Naive thymus-derived CD4-positive, alpha-beta T cell (primary cell): ENCODE measurements at regions of chr2 and their contacts with region 1.

Region 1: DNA sequence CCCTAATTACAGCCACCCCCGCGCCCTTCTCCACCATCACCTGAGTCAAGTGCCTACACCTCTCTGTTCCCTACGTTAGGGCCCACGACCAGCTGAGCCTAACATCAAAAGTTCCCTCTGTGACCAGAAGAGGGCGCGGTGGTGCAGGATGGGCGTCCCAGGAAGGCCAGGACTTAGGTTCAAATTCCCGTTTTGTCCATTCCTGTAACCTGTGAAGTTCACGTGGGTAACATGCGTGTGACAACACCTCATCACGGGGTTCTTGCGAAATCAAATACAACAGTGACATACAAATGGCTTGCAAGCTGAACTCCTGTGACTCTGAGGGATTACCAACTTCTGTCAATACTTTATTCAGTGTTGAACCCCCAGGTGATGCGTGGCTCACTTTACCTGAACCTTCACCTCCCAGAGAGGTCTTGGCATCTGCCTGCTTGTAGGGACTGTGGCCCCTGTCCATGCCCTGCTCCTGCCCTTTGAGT is 207.9 kb downstream of the ARL4C start:
- DNase-seq: peak; percentile 61 to 81 (median 70)
- ATAC-seq: peak; percentile 30
- H3K4me3 ChIP-seq: no peak overlapping the region
- H3K4me3 Mint-ChIP-seq: peak overlapping the region; percentile 10 to 87 (median 70)
- H3K27ac ChIP-seq: peak overlapping the region; percentile 94
- H3K27ac Mint-ChIP-seq: peak overlapping the region; percentile 92 to 100 (median 99)
- H3K4me1 ChIP-seq: peaks cover 56 to 63% of the 10 kb centered on the region in 2 donors
- H3K4me1 Mint-ChIP-seq: peaks cover 47 to 80% (median 68%) of the 10 kb centered on the region in 7 donors
- H3K27me3 ChIP-seq: no peaks in the 10 kb centered on the region
- H3K27me3 Mint-ChIP-seq: no peaks in the 10 kb centered on the region

Region 2: DNA sequence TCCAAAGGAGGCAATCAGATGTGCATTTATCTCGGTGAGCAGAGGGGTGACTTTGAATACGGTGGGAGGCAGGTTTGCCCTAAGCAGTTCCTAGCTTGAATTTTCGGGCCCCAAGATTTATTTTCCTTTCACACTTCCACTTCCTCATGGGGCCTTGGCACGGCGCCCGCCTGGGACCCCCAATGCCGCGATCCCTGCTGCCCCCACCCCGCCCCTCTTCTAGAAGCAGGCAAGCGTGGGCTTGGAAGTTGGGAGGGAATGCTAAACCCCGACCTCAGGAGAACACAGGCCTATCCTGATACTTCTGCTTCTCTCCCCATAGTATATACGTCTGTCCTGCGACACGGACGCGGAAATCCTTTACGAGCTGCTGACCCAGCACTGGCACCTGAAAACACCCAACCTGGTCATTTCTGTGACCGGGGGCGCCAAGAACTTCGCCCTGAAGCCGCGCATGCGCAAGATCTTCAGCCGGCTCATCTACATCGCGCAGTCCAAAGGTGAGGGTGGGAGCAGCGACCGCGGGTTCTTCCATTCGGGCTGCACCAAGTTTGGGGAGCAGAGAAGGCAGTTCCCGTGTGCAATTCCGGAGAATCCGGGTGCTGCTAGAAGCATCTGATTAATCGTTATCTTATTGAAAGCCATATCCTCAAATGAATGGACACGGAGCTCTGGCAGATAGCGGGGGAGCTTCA is 350.2 kb before region 1 on chr2:
- CTCF ChIA-PET with region 1: no interaction called
- POLR2A ChIA-PET with region 1: no interaction called
- intact Hi-C with region 1: no loop called
- DNase-seq: no peak
- ATAC-seq: no peak
- H3K4me3 ChIP-seq: peak overlapping the region; percentile 23
- H3K4me3 Mint-ChIP-seq: peak overlapping the region; percentile 41 to 77 (median 66)
- H3K27ac ChIP-seq: no peak overlapping the region
- H3K27ac Mint-ChIP-seq: no peak overlapping the region
- H3K4me1 ChIP-seq: peaks cover 0 to 5% of the 10 kb centered on the region in 2 donors
- H3K4me1 Mint-ChIP-seq: peaks cover 0 to 13% (median 8%) of the 10 kb centered on the region in 7 donors
- H3K27me3 ChIP-seq: no peaks in the 10 kb centered on the region
- H3K27me3 Mint-ChIP-seq: peaks cover 46 to 68% (median 62%) of the 10 kb centered on the region in 5 donors

Region 3: DNA sequence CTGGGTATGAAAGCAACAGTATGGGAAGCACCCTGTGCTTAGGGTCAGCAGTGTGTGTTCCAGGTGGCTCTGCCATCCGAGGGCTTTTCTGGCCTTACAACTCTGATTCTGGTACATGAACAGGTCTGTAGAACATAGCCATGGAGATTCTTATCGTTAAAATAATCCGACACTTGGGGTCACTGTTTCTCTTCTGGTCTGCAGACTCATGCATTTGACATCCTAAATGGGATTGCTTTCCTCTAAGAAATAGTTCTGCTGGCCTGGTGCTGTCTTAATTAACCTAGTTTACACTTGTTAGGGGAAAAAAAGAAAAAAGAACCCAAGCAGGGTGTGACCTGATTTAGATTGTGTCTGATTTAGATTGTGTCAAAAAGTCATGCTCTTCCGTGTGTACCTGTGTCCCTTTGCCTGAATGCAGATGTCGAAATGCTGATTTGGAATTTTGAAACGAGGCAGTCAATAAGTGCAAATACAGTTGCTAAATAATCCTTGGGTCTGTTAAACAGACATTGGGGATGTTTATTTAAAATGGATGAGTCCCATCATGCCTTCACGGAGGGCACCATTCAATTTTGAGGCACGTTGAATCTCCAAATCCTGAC is 312.2 kb before region 1 on chr2:
- CTCF ChIA-PET with region 1: interaction called, 6 read pairs
- POLR2A ChIA-PET with region 1: no interaction called
- intact Hi-C with region 1: loop called (anchors 2 to 5 kb)
- DNase-seq: peak in 6 of 9 donors; percentile 29 to 62 (median 55)
- ATAC-seq: peak; percentile 60
- H3K4me3 ChIP-seq: no peak overlapping the region
- H3K4me3 Mint-ChIP-seq: no peak overlapping the region
- H3K27ac ChIP-seq: no peak overlapping the region
- H3K27ac Mint-ChIP-seq: peak overlapping the region in 2 of 9 donors; percentile 7 to 69
- H3K4me1 ChIP-seq: peaks cover 0 to 25% of the 10 kb centered on the region in 2 donors
- H3K4me1 Mint-ChIP-seq: peaks cover 3 to 37% (median 25%) of the 10 kb centered on the region in 7 donors
- H3K27me3 ChIP-seq: no peaks in the 10 kb centered on the region
- H3K27me3 Mint-ChIP-seq: peaks cover 0 to 9% (median 0%) of the 10 kb centered on the region in 5 donors

Region 4: GRCh38 chr2:234278556-234279255 is 10.3 kb before region 1 on chr2:
- CTCF ChIA-PET with region 1: interaction called, 18 read pairs
- POLR2A ChIA-PET with region 1: interaction called, 11 read pairs
- intact Hi-C with region 1: loop called in 1 of 2 experiments (anchors 1 kb)
- DNase-seq: peak in 7 of 9 donors; percentile 28 to 77 (median 69)
- ATAC-seq: peak; percentile 81
- H3K4me3 ChIP-seq: no peak overlapping the region
- H3K4me3 Mint-ChIP-seq: peak overlapping the region in 9 of 10 donors; percentile 0 to 64 (median 52)
- H3K27ac ChIP-seq: no peak overlapping the region
- H3K27ac Mint-ChIP-seq: peak overlapping the region; percentile 38 to 90 (median 77)
- H3K4me1 ChIP-seq: peaks cover 16 to 42% of the 10 kb centered on the region in 2 donors
- H3K4me1 Mint-ChIP-seq: peaks cover 27 to 75% (median 59%) of the 10 kb centered on the region in 7 donors
- H3K27me3 ChIP-seq: no peaks in the 10 kb centered on the region
- H3K27me3 Mint-ChIP-seq: no peaks in the 10 kb centered on the region

Region 5: GRCh38 chr2:234368861-234369261 is 79.8 kb after region 1 on chr2:
- CTCF ChIA-PET with region 1: interaction called, 8 read pairs
- POLR2A ChIA-PET with region 1: interaction called, 34 read pairs
- intact Hi-C with region 1: loop called (anchors 1 to 2 kb)
- DNase-seq: peak in 7 of 9 donors; percentile 13 to 43 (median 28)
- ATAC-seq: peak; percentile 78
- H3K4me3 ChIP-seq: no peak overlapping the region
- H3K4me3 Mint-ChIP-seq: peak overlapping the region; percentile 6 to 80 (median 46)
- H3K27ac ChIP-seq: peak overlapping the region; percentile 48
- H3K27ac Mint-ChIP-seq: peak overlapping the region; percentile 81 to 98 (median 90)
- H3K4me1 ChIP-seq: peaks cover 31 to 71% of the 10 kb centered on the region in 2 donors
- H3K4me1 Mint-ChIP-seq: peaks cover 47 to 86% (median 80%) of the 10 kb centered on the region in 7 donors
- H3K27me3 ChIP-seq: no peaks in the 10 kb centered on the region
- H3K27me3 Mint-ChIP-seq: no peaks in the 10 kb centered on the region

Region 6: GRCh38 chr2:234446404-234447076 is 157.5 kb after region 1 on chr2:
- CTCF ChIA-PET with region 1: interaction called, 8 read pairs
- POLR2A ChIA-PET with region 1: interaction called, 270 read pairs
- intact Hi-C with region 1: loop called (anchors 1 kb)
- DNase-seq: peak; percentile 58 to 89 (median 85)
- ATAC-seq: peak; percentile 92
- H3K4me3 ChIP-seq: peak overlapping the region; percentile 29
- H3K4me3 Mint-ChIP-seq: peak overlapping the region; percentile 71 to 99 (median 86)
- H3K27ac ChIP-seq: peak overlapping the region; percentile 96
- H3K27ac Mint-ChIP-seq: peak overlapping the region; percentile 96 to 100 (median 100)
- H3K4me1 ChIP-seq: peaks cover 57 to 93% of the 10 kb centered on the region in 2 donors
- H3K4me1 Mint-ChIP-seq: peaks cover 60 to 98% (median 89%) of the 10 kb centered on the region in 7 donors
- H3K27me3 ChIP-seq: no peaks in the 10 kb centered on the region
- H3K27me3 Mint-ChIP-seq: no peaks in the 10 kb centered on the region

Region 7: GRCh38 chr2:234488913-234489451 is 200.0 kb after region 1 on chr2:
- CTCF ChIA-PET with region 1: interaction called, 14 read pairs
- POLR2A ChIA-PET with region 1: interaction called, 150 read pairs
- intact Hi-C with region 1: loop called (anchors 1 kb)
- DNase-seq: peak in 8 of 9 donors; percentile 64 to 89 (median 82)
- ATAC-seq: peak; percentile 80
- H3K4me3 ChIP-seq: peak overlapping the region; percentile 48
- H3K4me3 Mint-ChIP-seq: peak overlapping the region; percentile 85 to 100 (median 96)
- H3K27ac ChIP-seq: peak overlapping the region; percentile 94
- H3K27ac Mint-ChIP-seq: peak overlapping the region; percentile 91 to 100 (median 98)
- H3K4me1 ChIP-seq: peaks cover 68 to 83% of the 10 kb centered on the region in 2 donors
- H3K4me1 Mint-ChIP-seq: peaks cover 39 to 84% (median 79%) of the 10 kb centered on the region in 7 donors
- H3K27me3 ChIP-seq: no peaks in the 10 kb centered on the region
- H3K27me3 Mint-ChIP-seq: peaks cover 0 to 2% (median 0%) of the 10 kb centered on the region in 5 donors